Common myeloid progenitor, CD34-positive (primary cell): ENCODE measurements at regions of chr18 and their contacts with region 1.

Region 1: DNA sequence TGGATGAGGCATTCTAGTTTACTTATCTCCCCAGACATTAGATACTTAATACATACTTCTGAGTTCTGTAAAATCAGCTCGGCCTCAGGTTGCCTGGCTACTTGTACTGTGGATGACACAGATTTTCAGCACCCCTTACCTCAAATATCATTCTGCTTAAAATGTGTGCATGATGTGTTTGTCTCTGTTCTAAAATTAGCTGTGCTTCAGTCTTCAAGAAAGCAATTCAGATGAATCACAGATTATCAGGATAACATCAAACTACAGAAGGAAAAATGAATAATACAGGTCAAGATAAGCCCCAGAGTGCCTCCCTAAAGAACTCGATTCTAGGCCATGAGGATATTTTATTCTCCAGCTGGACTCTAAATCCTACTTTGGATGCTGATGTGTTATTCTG is 21.3 kb upstream of the MAPRE2 start:
- DNase-seq: no peak
- H3K4me3 ChIP-seq: no peak overlapping the region
- H3K27ac ChIP-seq: no peak overlapping the region
- H3K4me1 ChIP-seq: no peaks in the 10 kb centered on the region
- H3K27me3 ChIP-seq: no peaks in the 10 kb centered on the region

Region 2: DNA sequence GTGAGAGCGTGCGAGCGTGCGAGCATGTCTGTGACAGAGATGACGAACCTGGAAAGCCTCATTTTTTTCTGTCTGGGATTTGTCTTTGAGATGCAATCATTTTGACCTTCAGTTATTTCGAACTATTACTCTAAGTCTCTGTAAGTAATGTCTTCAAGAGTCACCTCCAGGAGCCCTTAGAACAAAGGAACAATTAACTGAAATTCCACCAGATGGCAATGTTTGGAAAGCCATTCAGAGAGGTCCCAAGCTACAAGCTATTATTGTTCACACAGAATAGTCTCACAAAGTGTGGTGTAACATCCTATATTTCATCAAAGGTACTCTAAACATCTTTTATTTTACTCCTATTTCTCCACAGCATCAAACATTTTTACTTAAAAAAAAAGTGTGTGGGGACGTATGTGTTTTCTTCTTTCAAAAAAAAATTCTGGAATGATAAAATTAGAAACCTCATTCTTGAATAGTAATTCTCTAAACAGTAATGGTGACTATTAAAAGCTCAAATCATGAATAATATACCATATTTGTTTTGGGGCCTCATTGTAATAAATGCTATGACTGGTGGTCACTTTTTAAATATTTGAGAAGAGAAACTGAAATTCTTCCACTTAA is 13.9 kb before region 1 on chr18:
- CTCF ChIA-PET with region 1: interaction called, 19 read pairs
- POLR2A ChIA-PET with region 1: no interaction called
- DNase-seq: peak; percentile 71 to 83 (median 76)
- H3K4me3 ChIP-seq: no peak overlapping the region
- H3K27ac ChIP-seq: no peak overlapping the region
- H3K4me1 ChIP-seq: no peaks in the 10 kb centered on the region
- H3K27me3 ChIP-seq: no peaks in the 10 kb centered on the region